ENCODE measurements at regions of chr2 and their contacts with region 1.

Region 1: GRCh38 chr2:172931918-172932520 is 143.6 kb upstream of the MAP3K20 start:
- DNase-seq: peak; percentile 73
- H3K4me3 ChIP-seq: no peak overlapping the region
- H3K27ac ChIP-seq: no peak overlapping the region
- H3K4me1 ChIP-seq: peaks cover 11% of the 10 kb centered on the region
- H3K27me3 ChIP-seq: no peaks in the 10 kb centered on the region
- CTCF ChIP-seq: peak; percentile 75

Region 2: GRCh38 chr2:172813314-172813888 is 118.6 kb before region 1 on chr2:
- CTCF ChIA-PET with region 1: interaction called, 11 read pairs
- POLR2A ChIA-PET with region 1: no interaction called
- intact Hi-C with region 1: loop called (anchors 2 kb)
- DNase-seq: peak; percentile 26
- H3K4me3 ChIP-seq: no peak overlapping the region
- H3K27ac ChIP-seq: no peak overlapping the region
- H3K4me1 ChIP-seq: no peaks in the 10 kb centered on the region
- H3K27me3 ChIP-seq: peaks cover 11% of the 10 kb centered on the region
- CTCF ChIP-seq: peak; percentile 50; the same call in 1 of the 2 replicates

Region 3: DNA sequence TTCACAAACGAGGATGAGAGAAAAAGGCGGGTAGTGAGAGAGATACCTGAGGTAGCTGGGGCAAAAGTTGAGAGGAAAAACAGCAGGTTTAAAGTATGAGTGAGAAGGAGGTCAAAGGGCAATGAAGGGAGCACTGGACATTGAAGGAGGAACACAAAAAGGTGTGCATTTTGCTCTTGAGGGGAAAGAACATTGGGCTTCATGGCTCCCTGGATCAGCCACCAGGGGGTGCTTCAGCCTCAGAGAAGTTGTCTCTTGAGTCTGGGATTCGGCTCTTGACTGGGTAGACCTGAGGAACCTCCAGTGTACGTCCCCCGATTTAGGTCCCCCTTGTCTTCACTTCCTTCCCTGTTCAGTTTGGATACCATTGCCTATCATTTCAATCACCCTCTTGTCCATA is 67.8 kb before region 1 on chr2:
- CTCF ChIA-PET with region 1: no interaction called
- POLR2A ChIA-PET with region 1: no interaction called
- intact Hi-C with region 1: loop called (anchors 2 kb)
- DNase-seq: peak; percentile 56
- H3K4me3 ChIP-seq: no peak overlapping the region
- H3K27ac ChIP-seq: no peak overlapping the region
- H3K4me1 ChIP-seq: no peaks in the 10 kb centered on the region
- H3K27me3 ChIP-seq: peaks cover 41% of the 10 kb centered on the region
- CTCF ChIP-seq: peak; percentile 74

Region 4: DNA sequence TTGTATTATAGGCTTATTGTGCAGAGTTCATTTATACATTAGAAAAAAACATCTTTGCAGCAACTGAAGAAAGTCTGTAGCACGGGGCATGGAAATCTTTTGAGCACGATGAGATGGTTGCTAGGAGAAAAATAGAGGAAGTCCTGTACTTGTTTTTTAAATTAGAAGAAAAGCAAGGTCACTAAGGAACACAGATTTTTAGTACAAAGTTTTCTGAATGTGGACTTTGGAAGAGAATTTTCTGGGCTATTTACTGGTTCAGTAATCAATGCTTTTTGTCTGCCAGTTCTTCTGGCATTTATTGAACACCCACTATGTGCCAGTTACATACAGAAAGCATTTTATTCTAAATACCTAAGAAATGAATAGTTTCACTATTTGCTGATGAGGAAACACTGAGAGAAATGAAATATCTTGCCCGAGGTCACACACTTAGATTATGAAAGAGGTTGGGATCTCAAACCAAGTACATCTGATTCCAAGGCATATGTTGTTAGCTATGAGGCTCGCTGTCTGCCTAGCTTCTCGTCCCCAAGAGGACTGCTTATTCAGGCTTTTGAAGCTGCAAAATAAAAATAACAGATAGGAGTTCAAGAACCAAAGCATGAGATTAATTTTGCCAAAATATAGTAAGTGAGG is 128.0 kb after region 1 on chr2:
- CTCF ChIA-PET with region 1: no interaction called
- POLR2A ChIA-PET with region 1: no interaction called
- intact Hi-C with region 1: no loop called
- DNase-seq: no peak
- H3K4me3 ChIP-seq: no peak overlapping the region
- H3K27ac ChIP-seq: no peak overlapping the region
- H3K4me1 ChIP-seq: peaks cover 11% of the 10 kb centered on the region
- H3K27me3 ChIP-seq: no peaks in the 10 kb centered on the region
- CTCF ChIP-seq: no peak

Measured in A673 (cell line).